ENCODE measurements at regions of chr14 and their contacts with region 1.

Region 1: GRCh38 chr14:92783816-92784431 is 10.2 kb upstream of the GOLGA5 start:
- DNase-seq: peak; percentile 29
- H3K4me3 ChIP-seq: no peak overlapping the region
- H3K27ac ChIP-seq: no peak overlapping the region
- H3K4me1 ChIP-seq: peaks cover 0 to 11% (median 0%) of the 10 kb centered on the region in 4 donors
- H3K27me3 ChIP-seq: no peaks in the 10 kb centered on the region
- CTCF ChIP-seq: peak; percentile 57 to 81 (median 65)
- EP300 ChIP-seq: no peak
- POLR2A ChIP-seq: no peak

Region 2: GRCh38 chr14:92719890-92720323 is 64.0 kb before region 1 on chr14:
- in situ Hi-C with region 1: loop called in 3 of 4 experiments (anchors 5 kb)
- intact Hi-C with region 1: loop called (anchors 2 kb)
- DNase-seq: peak; percentile 81
- H3K4me3 ChIP-seq: no peak overlapping the region
- H3K27ac ChIP-seq: peak overlapping the region; percentile 76 to 86 (median 82)
- H3K4me1 ChIP-seq: peaks cover 17 to 49% (median 19%) of the 10 kb centered on the region in 4 donors
- H3K27me3 ChIP-seq: no peaks in the 10 kb centered on the region
- CTCF ChIP-seq: no peak
- EP300 ChIP-seq: peak; percentile 8
- POLR2A ChIP-seq: no peak

Region 3: DNA sequence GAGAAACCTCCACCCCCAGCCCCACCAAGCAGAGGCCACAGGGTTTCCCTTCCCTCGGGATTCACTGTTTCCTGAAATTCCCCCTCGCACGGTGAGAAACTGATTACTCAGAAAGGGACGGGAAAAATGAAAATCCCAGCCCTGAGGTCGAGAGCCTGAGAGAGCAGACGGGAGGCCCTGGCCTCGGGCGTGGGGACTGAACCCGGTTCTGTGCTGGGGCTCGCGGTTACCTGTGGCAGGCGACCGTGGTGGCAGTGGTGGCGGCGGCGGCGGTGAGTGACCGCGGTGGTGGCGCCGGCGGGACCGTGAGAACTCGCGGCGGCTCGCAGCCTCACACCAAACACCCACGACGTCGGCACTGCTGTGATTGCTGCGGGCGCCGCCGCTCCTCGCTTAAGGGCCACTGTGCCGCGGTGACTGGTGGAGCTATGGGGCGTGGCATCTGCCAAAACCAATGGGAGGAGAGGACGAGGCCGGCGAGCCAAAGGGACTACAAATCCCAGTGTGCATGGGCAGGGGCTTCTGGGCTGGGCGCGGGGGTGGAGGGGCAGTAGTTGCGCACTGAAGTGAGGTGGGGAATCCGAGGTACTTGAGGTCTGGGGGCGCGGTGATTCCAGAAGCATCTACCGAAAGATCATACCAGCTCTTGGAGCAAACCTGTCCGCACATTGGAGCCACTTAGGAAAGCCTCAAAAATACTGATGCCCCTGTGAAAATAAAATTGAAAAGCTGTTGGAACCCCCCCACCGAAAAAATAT is 35.5 kb before region 1 on chr14 and contains the start of gene LGMN:
- in situ Hi-C with region 1: no loop called
- intact Hi-C with region 1: no loop called
- DNase-seq: peak; percentile 96
- H3K4me3 ChIP-seq: peak within 1 kb of the TSS; percentile 50 to 81 (median 68)
- H3K27ac ChIP-seq: peak within 1 kb of the TSS; percentile 85 to 91 (median 87)
- H3K4me1 ChIP-seq: peaks cover 0 to 20% (median 11%) of the 10 kb centered on the region in 4 donors
- H3K27me3 ChIP-seq: no peaks in the 10 kb centered on the region
- CTCF ChIP-seq: no peak
- EP300 ChIP-seq: no peak
- POLR2A ChIP-seq: peak; percentile 97
- total RNA-seq, gene LGMN: 26.5 to 103 (median 57.2) TPM

Region 4: GRCh38 chr14:92813201-92813600 is 29.3 kb after region 1 on chr14:
- in situ Hi-C with region 1: no loop called
- intact Hi-C with region 1: no loop called
- DNase-seq: no peak
- H3K4me3 ChIP-seq: no peak overlapping the region
- H3K27ac ChIP-seq: no peak overlapping the region
- H3K4me1 ChIP-seq: no peaks in the 10 kb centered on the region
- H3K27me3 ChIP-seq: no peaks in the 10 kb centered on the region
- CTCF ChIP-seq: no peak
- EP300 ChIP-seq: no peak
- POLR2A ChIP-seq: no peak